Endothelial cell of umbilical vein (primary cell): ENCODE measurements at regions of chr1 and their contacts with region 1.

Region 1: GRCh38 chr1:94061513-94062443 is 59.2 kb downstream of the ABCA4 start:
- DNase-seq: peak; percentile 86
- H3K4me3 ChIP-seq: no peak overlapping the region
- H3K27ac ChIP-seq: peak overlapping the region; percentile 76
- H3K4me1 ChIP-seq: peaks cover 48% of the 10 kb centered on the region
- H3K27me3 ChIP-seq: no peaks in the 10 kb centered on the region
- CTCF ChIP-seq: peak; percentile 92 to 93
- POLR2A ChIP-seq: peak; percentile 36

Region 2: GRCh38 chr1:94045465-94046056 is 16.2 kb before region 1 on chr1:
- CTCF ChIA-PET with region 1: interaction called, 71 read pairs
- POLR2A ChIA-PET with region 1: interaction called, 6 read pairs
- dilution Hi-C with region 1: no loop called
- intact Hi-C with region 1: loop called (anchors 1 kb)
- DNase-seq: peak; percentile 97
- H3K4me3 ChIP-seq: no peak overlapping the region
- H3K27ac ChIP-seq: peak overlapping the region; percentile 89
- H3K4me1 ChIP-seq: peaks cover 65% of the 10 kb centered on the region
- H3K27me3 ChIP-seq: no peaks in the 10 kb centered on the region
- CTCF ChIP-seq: peak; percentile 66 to 89
- POLR2A ChIP-seq: peak; percentile 80

Region 3: DNA sequence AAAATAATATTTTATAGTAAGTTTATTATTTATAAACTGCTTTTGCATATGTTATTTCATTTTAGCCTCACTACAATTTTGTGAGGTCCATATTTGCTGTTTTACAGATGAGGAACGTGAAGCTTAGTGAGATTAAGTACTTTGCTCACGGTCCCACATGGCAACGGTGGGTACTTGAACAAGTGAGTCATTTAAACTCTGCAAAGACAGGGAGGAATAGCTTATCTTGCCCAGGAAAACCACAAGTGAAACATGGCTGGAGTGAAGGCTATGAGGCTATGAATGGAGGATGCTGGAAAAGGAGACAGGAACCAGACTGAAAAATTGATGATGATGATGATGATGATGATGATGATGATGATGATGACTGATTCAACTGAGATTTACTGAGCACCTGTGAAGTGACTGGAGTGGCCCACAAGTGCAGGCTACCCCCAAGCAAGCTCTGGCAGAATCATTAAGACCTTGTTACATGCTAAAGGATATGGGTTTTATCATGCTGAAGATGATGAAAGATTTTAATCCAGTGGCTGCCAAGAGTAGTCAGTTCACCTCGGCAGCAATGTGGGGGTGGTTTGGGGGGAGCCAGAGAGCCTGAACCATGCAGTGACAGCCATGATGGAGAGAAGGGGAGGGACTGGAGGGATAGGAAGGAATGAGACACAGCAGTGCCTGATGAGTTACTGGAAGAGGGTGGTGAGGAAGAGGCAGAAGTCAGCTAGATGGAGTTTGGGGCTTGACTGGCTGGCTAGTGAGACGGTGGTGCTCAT is 60.6 kb after region 1 on chr1:
- CTCF ChIA-PET with region 1: interaction called, 13 read pairs
- POLR2A ChIA-PET with region 1: interaction called, 3 read pairs
- dilution Hi-C with region 1: no loop called
- intact Hi-C with region 1: no loop called
- DNase-seq: peak; percentile 39
- H3K4me3 ChIP-seq: no peak overlapping the region
- H3K27ac ChIP-seq: no peak overlapping the region
- H3K4me1 ChIP-seq: peaks cover 13% of the 10 kb centered on the region
- H3K27me3 ChIP-seq: no peaks in the 10 kb centered on the region
- CTCF ChIP-seq: no peak
- POLR2A ChIP-seq: no peak

Region 4: DNA sequence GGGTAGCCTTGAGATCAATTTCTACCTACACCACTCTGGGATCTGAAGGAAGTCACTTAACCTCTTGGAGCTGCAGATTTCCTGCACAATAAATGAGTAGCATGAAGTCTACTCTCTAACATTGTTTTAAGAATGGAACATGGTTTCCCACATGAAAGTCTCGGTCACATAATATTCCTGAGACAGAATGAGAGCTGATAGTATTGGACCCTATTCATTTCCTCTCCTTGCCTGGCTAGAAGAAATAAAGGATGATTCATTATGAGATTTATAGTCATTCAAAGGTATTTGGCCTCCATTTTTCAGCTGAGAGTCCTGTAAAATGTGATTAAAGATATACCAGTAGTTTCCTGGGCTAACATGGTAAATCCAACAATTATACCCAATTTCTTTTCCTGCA is 118.9 kb after region 1 on chr1:
- CTCF ChIA-PET with region 1: interaction called, 45 read pairs
- POLR2A ChIA-PET with region 1: no interaction called
- dilution Hi-C with region 1: no loop called
- intact Hi-C with region 1: loop called (anchors 2 kb)
- DNase-seq: peak; percentile 49
- H3K4me3 ChIP-seq: no peak overlapping the region
- H3K27ac ChIP-seq: peak overlapping the region; percentile 18
- H3K4me1 ChIP-seq: peaks cover 36% of the 10 kb centered on the region
- H3K27me3 ChIP-seq: no peaks in the 10 kb centered on the region
- CTCF ChIP-seq: no peak
- POLR2A ChIP-seq: no peak

Region 5: DNA sequence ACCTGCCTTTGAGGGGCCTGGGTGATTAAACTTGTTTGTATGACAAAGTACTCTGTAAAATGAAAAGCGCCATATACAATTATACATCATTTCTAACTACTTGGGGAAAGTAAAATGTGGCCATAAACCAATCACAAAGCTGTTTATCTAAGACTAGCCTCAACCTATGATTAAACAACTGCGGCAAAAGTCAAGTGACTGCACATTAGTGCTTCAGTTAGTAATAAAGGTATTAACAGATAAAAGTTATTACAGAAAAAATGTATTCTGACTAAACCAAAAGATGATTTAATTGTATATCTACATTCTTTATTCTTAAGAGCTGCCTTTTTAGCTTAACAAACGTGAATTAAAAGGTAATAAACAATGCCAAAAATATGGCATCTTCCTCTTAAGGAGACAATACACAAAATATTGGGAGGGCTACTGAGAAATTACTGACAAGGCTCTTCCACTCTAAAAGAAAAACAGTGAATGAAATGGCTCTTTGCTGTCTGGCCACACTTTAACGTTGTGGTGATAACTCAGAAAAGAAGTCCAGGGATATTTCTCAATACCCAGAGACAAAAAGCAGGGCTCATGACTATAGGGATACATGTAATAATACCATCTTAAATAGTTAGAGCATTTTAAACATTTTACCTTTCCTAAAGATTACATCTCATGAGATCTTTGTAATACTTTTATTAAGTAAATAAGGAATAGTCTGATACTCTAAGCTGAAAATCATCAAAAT is 167.0 kb after region 1 on chr1:
- CTCF ChIA-PET with region 1: interaction called, 22 read pairs
- POLR2A ChIA-PET with region 1: interaction called, 5 read pairs
- dilution Hi-C with region 1: no loop called
- intact Hi-C with region 1: no loop called
- DNase-seq: no peak
- H3K4me3 ChIP-seq: peak overlapping the region in 1 of 3 experiments; percentile 12
- H3K27ac ChIP-seq: no peak overlapping the region
- H3K4me1 ChIP-seq: peaks cover 71% of the 10 kb centered on the region
- H3K27me3 ChIP-seq: no peaks in the 10 kb centered on the region
- CTCF ChIP-seq: no peak
- POLR2A ChIP-seq: no peak

Region 6: DNA sequence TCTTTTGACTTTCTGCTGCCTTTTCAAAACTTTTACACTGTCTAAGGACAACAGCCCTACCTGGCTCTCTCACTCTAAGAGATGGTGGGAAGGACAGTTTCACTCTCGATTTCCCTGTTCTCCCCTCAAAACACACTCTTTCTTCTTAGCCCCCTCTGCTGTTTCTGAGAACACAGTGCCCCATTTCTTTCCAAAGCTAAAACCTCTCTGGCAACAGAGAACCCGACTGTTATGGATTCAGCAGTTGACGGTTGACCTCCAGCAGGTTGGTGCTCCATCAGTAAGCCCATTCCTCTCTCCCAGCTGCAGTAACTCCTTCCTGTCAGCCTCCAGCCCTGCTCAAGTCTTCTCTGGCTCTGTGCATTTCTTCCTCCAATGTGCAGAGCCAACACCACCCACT is 268.2 kb after region 1 on chr1:
- CTCF ChIA-PET with region 1: interaction called, 252 read pairs
- POLR2A ChIA-PET with region 1: interaction called, 4 read pairs
- dilution Hi-C with region 1: no loop called
- intact Hi-C with region 1: loop called (anchors 1 kb)
- DNase-seq: peak; percentile 76
- H3K4me3 ChIP-seq: no peak overlapping the region
- H3K27ac ChIP-seq: peak overlapping the region; percentile 26
- H3K4me1 ChIP-seq: peaks cover 50% of the 10 kb centered on the region
- H3K27me3 ChIP-seq: no peaks in the 10 kb centered on the region
- CTCF ChIP-seq: peak; percentile 65 to 70
- POLR2A ChIP-seq: no peak

Region 7: DNA sequence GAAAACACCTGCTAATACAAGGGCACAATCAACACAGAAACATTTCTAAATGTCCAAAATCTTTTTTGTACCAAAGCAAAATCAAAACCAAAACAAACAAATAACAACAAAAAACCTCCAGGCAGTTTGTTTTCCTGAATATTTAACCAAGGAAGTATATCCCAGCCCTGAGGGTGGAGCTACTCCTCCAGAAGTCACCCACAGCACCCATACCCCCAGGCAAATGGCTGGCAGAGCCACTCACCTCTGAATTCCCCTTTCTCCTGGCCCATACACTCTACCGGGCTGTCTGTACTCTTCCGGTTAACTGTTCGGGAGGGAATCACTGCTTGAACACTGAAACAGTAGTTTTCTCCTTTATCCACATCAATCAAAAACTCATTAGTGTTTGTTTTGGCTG is 470.3 kb after region 1 on chr1:
- CTCF ChIA-PET with region 1: no interaction called
- POLR2A ChIA-PET with region 1: no interaction called
- dilution Hi-C with region 1: no loop called
- intact Hi-C with region 1: no loop called
- DNase-seq: no peak
- H3K4me3 ChIP-seq: no peak overlapping the region
- H3K27ac ChIP-seq: no peak overlapping the region
- H3K4me1 ChIP-seq: no peaks in the 10 kb centered on the region
- H3K27me3 ChIP-seq: no peaks in the 10 kb centered on the region
- CTCF ChIP-seq: no peak
- POLR2A ChIP-seq: no peak